HepG2 (cell line): ENCODE measurements at regions of chr4 and their contacts with region 1.

Region 1: GRCh38 chr4:185811509-185812364 is at the start of gene SORBS2:
- DNase-seq: peak; percentile 81
- ATAC-seq: peak; percentile 72
- H3K4me3 ChIP-seq: peak within 1 kb of the TSS; percentile 60 to 82 (median 82)
- H3K27ac ChIP-seq: peak within 1 kb of the TSS; percentile 97
- H3K4me1 ChIP-seq: peaks cover 46% of the 10 kb centered on the region
- H3K27me3 ChIP-seq: no peaks in the 10 kb centered on the region; a peak in 1 of 5 replicates
- CTCF ChIP-seq: no peak
- EP300 ChIP-seq: no peak
- POLR2A ChIP-seq: peak in 1 of 2 experiments; percentile 42; a peak in 1 of 4 replicates
- RAD21 ChIP-seq: no peak
- total RNA-seq, gene SORBS2: 25.0 and 29.0 TPM in 2 replicates

Region 2: DNA sequence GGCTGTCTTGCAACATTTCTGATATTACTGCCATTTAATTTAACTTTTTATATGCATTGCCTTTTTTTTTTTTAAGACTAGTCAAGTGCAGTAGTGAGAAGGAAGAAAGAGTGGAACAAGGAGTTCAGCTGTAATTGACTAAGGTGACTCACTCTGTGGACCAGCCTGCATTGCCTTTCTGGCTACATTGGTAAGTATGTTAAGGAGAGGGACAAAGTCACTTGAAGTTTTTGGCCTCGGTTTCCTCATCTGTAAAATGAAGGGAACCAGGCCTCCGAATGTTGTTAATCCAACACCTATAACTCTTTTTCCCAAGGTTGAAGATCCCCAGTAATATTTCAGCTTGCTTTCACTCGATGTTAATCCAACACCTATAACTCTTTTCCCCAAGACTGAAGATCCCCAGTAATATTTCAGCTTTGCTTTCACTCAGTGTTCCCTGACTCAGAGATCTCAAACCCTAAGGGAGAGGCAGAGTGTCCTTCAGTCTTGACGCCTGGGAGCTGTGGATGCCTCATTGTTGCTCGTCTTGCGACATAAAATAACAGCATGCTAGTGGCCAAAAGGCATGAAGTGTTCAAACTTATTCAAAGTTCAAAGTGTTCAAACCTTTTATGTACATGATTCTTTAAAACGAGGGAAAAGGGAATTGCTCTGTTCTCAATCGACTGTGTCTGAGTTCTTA is 101.8 kb before region 1 on chr4:
- CTCF ChIA-PET with region 1: no interaction called
- POLR2A ChIA-PET with region 1: interaction called, 64 read pairs
- in situ Hi-C with region 1: no loop called
- intact Hi-C with region 1: loop called (anchors 2 kb)
- DNase-seq: peak; percentile 74
- ATAC-seq: peak; percentile 29
- H3K4me3 ChIP-seq: no peak overlapping the region
- H3K27ac ChIP-seq: peak overlapping the region; percentile 48
- H3K4me1 ChIP-seq: peaks cover 58% of the 10 kb centered on the region
- H3K27me3 ChIP-seq: no peaks in the 10 kb centered on the region
- CTCF ChIP-seq: no peak
- EP300 ChIP-seq: peak in 1 of 2 experiments; percentile 31; a peak in 1 of 4 replicates
- POLR2A ChIP-seq: no peak
- RAD21 ChIP-seq: no peak

Region 3: DNA sequence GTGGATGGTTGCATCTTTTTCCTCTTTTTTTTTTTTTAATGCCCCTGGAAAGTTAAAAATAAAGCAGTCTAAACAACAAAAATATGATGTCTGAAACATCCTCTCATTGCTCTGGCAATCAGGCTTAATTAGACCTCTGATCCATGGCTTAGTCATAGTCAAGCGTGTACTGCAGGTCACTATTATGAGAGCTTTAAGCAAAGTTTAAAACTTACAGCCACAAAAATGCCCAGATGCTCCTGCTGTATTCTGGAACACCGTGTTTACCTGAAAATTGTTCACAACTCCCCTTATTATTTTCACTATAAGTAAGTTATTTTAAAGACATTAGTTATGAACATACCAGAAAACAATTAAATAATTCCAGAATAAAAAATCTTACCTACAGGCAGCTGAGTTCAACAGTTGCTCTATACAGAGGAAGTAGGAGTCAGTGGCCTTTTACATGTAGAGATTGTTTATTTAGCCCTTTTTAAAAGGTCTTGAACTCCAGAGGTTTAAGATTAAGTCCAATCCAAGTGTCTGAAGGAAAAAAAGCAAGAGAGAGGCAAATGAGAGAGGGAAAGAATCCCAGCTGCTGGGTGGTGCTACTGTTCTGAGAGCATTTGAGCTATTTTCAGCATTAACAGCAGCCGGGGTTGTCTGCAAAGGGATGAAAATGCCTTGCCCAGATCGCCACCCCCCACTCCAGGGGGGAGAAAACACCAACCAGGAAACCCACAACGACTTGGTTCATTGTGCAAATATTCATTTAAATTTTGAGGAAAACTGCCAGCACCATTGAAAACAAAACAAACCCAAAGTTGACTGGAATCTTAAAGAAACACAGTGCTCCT is 36.7 kb before region 1 on chr4:
- CTCF ChIA-PET with region 1: no interaction called
- POLR2A ChIA-PET with region 1: interaction called, 43 read pairs
- in situ Hi-C with region 1: no loop called
- intact Hi-C with region 1: loop called (anchors 1 kb)
- DNase-seq: no peak
- ATAC-seq: peak; percentile 47
- H3K4me3 ChIP-seq: peak overlapping the region; percentile 9 to 46 (median 45); a peak in 5 of 6 replicates
- H3K27ac ChIP-seq: peak overlapping the region; percentile 96
- H3K4me1 ChIP-seq: peaks cover 63% of the 10 kb centered on the region
- H3K27me3 ChIP-seq: no peaks in the 10 kb centered on the region
- CTCF ChIP-seq: no peak
- EP300 ChIP-seq: no peak
- POLR2A ChIP-seq: no peak
- RAD21 ChIP-seq: no peak

Region 4: DNA sequence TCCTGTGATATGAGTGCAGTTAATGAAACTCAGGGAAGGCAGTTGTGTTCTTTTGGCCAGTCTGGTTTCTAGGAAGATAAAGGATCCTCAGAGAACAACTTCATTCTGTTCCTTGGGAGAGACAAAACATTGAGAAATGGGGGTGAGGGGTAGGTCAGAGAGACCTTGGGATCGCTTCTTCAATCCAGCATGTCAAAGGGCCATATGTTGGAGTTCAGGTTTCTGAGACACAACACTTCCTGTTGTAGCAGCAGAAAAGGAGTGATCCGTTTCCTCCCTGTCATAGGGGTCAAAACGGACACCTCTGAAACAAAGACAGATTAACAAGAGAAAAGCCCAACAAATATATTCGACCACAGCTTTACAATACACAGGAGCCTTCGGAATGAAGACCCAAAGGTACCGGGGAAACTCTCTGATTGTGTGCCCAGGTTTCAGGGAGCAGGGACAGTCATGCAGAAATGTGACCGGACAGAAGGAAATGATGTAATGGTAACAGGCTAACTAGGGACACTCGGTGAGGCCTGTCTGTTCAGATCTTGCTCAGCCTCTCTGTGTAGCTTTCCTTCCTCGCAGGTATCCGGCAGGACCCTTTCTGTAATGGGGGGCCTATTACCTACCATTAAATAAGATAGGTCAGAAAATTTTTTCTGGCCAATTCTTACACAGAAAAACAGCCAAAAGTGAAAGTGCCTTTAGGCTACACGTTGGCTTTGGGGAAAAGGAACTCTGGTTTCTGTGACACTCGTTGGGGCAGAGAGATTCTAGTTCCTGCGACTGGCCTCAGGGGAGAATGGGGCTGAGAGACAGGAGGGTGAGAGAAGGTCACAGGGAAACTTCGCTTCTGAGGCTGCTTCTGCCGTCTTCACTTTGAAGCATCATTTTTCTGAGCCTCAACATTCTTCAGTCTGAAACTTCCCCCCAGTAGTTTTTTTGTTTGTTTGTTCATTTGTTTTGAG is 154.0 kb after region 1 on chr4:
- CTCF ChIA-PET with region 1: no interaction called
- POLR2A ChIA-PET with region 1: no interaction called
- in situ Hi-C with region 1: no loop called
- intact Hi-C with region 1: loop called (anchors 10 kb)
- DNase-seq: no peak
- ATAC-seq: no peak
- H3K4me3 ChIP-seq: no peak overlapping the region
- H3K27ac ChIP-seq: no peak overlapping the region
- H3K4me1 ChIP-seq: peaks cover 25% of the 10 kb centered on the region
- H3K27me3 ChIP-seq: no peaks in the 10 kb centered on the region
- CTCF ChIP-seq: no peak
- EP300 ChIP-seq: no peak
- POLR2A ChIP-seq: no peak
- RAD21 ChIP-seq: no peak